Esophagus muscularis mucosa (tissue), 4 donors: ENCODE measurements at regions of chr4 and their contacts with region 1.

Region 1: GRCh38 chr4:1249148-1249730 is 309 bp upstream of the CTBP1 start:
- DNase-seq: peak; percentile 93
- H3K4me3 ChIP-seq: peak overlapping the region; percentile 73 to 97 (median 80)
- H3K27ac ChIP-seq: peak overlapping the region; percentile 91 to 99 (median 96)
- H3K4me1 ChIP-seq: peaks cover 52 to 68% (median 55%) of the 10 kb centered on the region in 4 donors
- H3K27me3 ChIP-seq: no peaks in the 10 kb centered on the region
- CTCF ChIP-seq: no peak
- EP300 ChIP-seq: no peak
- POLR2A ChIP-seq: no peak

Region 2: GRCh38 chr4:866761-867390 is 382.4 kb before region 1 on chr4:
- intact Hi-C with region 1: no loop called
- DNase-seq: no peak
- H3K4me3 ChIP-seq: no peak overlapping the region
- H3K27ac ChIP-seq: no peak overlapping the region
- H3K4me1 ChIP-seq: no peaks in the 10 kb centered on the region
- H3K27me3 ChIP-seq: no peaks in the 10 kb centered on the region
- CTCF ChIP-seq: no peak
- EP300 ChIP-seq: no peak
- POLR2A ChIP-seq: no peak

Region 3: DNA sequence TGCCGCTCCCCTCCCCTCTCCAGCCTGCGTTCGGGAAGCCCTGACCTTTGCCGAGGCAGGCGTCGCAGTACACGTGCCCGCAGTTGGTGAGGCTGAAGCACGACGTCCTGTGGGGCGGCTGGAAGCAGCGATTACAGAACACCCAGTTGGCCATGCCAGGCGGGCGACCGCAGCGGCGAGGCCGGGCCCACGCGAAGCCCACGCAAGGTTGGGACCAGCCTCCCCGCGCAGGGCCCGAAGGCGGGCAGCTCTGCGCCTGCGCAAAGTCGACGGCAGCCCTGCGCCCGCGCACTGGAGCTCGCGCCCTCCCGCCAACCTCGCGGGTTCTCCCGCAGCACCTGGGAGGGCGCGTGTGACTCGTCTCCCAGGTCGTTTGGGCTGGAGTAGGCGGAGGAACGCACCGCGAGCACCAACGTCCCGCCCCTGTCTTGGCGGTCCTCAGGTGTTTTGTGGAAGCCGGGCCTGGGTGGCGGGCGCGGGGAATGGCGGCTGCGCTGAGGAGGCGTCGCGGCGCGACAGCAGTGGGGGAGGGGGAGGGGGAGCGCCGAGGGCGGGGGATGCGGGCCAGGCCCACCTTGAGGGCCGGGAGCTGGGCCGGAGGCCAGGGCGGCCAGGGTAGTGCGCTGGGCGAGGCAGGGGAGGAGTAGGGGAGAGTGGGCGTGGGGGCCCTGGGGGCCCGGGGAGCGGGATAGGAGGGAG is 135.8 kb before region 1 on chr4 and contains the start of gene RNF212:
- intact Hi-C with region 1: no loop called
- DNase-seq: peak; percentile 42
- H3K4me3 ChIP-seq: peak within 1 kb of the TSS; percentile 49 to 55 (median 52)
- H3K27ac ChIP-seq: no peak within 1 kb of the TSS
- H3K4me1 ChIP-seq: peaks cover 4 to 8% (median 7%) of the 10 kb centered on the region in 4 donors
- H3K27me3 ChIP-seq: peaks cover 0 to 55% (median 7%) of the 10 kb centered on the region in 4 donors
- CTCF ChIP-seq: no peak
- EP300 ChIP-seq: no peak
- POLR2A ChIP-seq: no peak
- total RNA-seq, gene RNF212: 3.8 to 9.7 (median 7.3) TPM

Region 4: DNA sequence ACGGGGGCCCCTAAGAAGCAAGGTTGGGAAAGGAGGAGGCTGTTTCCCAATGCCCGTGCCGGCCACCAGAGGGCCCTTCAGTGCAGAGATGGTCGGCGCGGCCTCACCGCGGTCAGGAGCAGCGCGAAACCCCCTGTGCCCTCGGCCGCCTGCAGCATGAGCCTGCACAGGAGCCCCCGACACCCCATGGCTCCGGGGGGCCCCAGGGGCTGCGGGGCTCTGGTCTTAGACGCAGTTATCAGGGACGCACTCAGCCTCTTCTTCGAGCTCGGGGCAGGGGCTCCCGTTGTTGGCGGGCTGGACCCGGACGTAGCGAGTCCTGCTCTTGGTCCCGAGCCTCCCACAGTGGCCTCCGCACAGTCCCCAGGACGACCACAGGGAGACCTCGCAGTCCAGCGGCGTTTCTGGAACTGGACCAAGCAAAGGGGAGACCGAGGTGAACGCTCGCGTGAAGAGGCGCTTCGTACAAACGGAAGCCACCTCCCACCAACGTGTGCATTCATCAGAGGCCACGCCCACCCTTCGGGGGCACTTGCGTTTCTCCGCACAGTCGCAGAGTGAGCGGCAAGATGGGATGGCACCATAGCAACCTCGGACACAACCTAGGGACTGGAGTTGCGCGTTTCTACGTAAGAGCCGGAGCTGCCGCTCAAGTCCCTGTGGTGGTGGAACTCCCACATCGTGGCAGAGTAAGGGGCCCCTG is 81.8 kb before region 1 on chr4:
- intact Hi-C with region 1: loop called (anchors 2 kb)
- DNase-seq: peak; percentile 93
- H3K4me3 ChIP-seq: peak overlapping the region; percentile 59 to 67 (median 66)
- H3K27ac ChIP-seq: peak overlapping the region; percentile 29 to 58 (median 42)
- H3K4me1 ChIP-seq: peaks cover 31 to 47% (median 43%) of the 10 kb centered on the region in 4 donors
- H3K27me3 ChIP-seq: peaks cover 7 to 31% (median 22%) of the 10 kb centered on the region in 4 donors
- CTCF ChIP-seq: peak in 2 of 3 experiments; percentile 85 to 92
- EP300 ChIP-seq: no peak
- POLR2A ChIP-seq: no peak

Region 5: GRCh38 chr4:1183985-1184773 is 65.1 kb before region 1 on chr4:
- intact Hi-C with region 1: no loop called
- DNase-seq: no peak
- H3K4me3 ChIP-seq: peak overlapping the region in 2 of 4 donors; percentile 1 to 8
- H3K27ac ChIP-seq: peak overlapping the region in 3 of 4 donors; percentile 8 to 42 (median 24)
- H3K4me1 ChIP-seq: peaks cover 0 to 5% (median 2%) of the 10 kb centered on the region in 4 donors
- H3K27me3 ChIP-seq: no peaks in the 10 kb centered on the region
- CTCF ChIP-seq: no peak
- EP300 ChIP-seq: no peak
- POLR2A ChIP-seq: no peak

Region 6: DNA sequence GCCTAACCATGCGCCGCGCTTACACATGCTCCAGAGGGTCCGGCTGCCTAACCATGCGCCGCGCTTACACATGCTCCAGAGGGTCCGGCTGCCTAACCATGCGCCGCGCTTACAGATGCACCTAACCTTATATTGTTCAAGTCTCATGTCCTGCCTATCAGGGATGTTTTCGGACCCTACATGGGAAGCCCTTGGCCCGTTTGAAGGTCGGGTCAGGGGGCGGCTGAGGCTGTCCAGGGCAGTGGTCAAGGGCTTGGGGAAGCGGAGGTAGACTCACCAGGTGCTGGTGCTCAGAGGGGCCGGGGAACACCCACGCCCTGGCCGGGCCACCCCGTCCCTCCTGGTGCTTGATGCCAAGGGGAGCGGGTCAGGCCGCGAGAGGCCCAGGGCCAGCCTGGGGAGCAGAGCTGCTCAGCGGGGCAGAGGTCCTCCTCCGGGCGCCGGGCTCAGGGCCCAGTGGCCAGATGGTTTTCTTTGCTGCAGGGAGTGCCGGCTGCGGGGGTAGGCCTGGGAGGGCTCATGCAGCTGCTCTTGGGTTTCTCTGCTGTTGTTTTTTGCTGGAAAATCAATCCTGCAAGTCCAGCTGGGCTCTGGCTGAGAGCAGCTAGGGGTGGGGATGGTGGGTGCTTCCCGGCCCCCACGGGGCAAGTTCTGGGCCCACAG is 41.5 kb before region 1 on chr4:
- intact Hi-C with region 1: loop called (anchors 5 kb)
- DNase-seq: no peak
- H3K4me3 ChIP-seq: peak overlapping the region in 3 of 4 donors; percentile 9 to 24 (median 22)
- H3K27ac ChIP-seq: peak overlapping the region; percentile 58 to 75 (median 66)
- H3K4me1 ChIP-seq: peaks cover 50 to 85% (median 76%) of the 10 kb centered on the region in 4 donors
- H3K27me3 ChIP-seq: no peaks in the 10 kb centered on the region
- CTCF ChIP-seq: no peak
- EP300 ChIP-seq: no peak
- POLR2A ChIP-seq: no peak

Region 7: GRCh38 chr4:1309261-1310010 is 60.2 kb after region 1 on chr4:
- intact Hi-C with region 1: loop called (anchors 5 kb)
- DNase-seq: peak; percentile 98
- H3K4me3 ChIP-seq: peak overlapping the region; percentile 53 to 57 (median 56)
- H3K27ac ChIP-seq: peak overlapping the region; percentile 65 to 84 (median 76)
- H3K4me1 ChIP-seq: peaks cover 32 to 53% (median 44%) of the 10 kb centered on the region in 4 donors
- H3K27me3 ChIP-seq: no peaks in the 10 kb centered on the region
- CTCF ChIP-seq: peak in 1 of 3 experiments; percentile 18
- EP300 ChIP-seq: no peak
- POLR2A ChIP-seq: no peak

Region 8: GRCh38 chr4:1346781-1347409 is 97.7 kb after region 1 on chr4 and contains the start of gene UVSSA:
- intact Hi-C with region 1: loop called (anchors 2 kb)
- DNase-seq: peak; percentile 100
- H3K4me3 ChIP-seq: peak within 1 kb of the TSS; percentile 96 to 99 (median 98)
- H3K27ac ChIP-seq: peak within 1 kb of the TSS; percentile 96 to 100 (median 98)
- H3K4me1 ChIP-seq: peaks cover 21 to 50% (median 46%) of the 10 kb centered on the region in 4 donors
- H3K27me3 ChIP-seq: no peaks in the 10 kb centered on the region
- CTCF ChIP-seq: no peak
- EP300 ChIP-seq: no peak
- POLR2A ChIP-seq: peak; percentile 82
- total RNA-seq, gene UVSSA: 8.9 to 16.5 (median 13.1) TPM